Mammary epithelial cell (primary cell): ENCODE measurements at regions of chr19 and their contacts with region 1.

Region 1: GRCh38 chr19:35495107-35496064 is 5.1 kb upstream of the KRTDAP start:
- DNase-seq: peak; percentile 57
- H3K4me3 ChIP-seq: peak overlapping the region in 1 of 3 experiments; percentile 9
- H3K27ac ChIP-seq: no peak overlapping the region
- H3K4me1 ChIP-seq: peaks cover 6% of the 10 kb centered on the region
- H3K27me3 ChIP-seq: peaks cover 3% of the 10 kb centered on the region
- CTCF ChIP-seq: peak; percentile 94 to 99

Region 2: GRCh38 chr19:35269421-35270117 is 225.8 kb before region 1 on chr19:
- CTCF ChIA-PET with region 1: no interaction called
- dilution Hi-C with region 1: no loop called
- in situ Hi-C with region 1: no loop called
- intact Hi-C with region 1: loop called (anchors 1 kb)
- DNase-seq: peak; percentile 70
- H3K4me3 ChIP-seq: peak overlapping the region; percentile 15 to 72 (median 62)
- H3K27ac ChIP-seq: no peak overlapping the region
- H3K4me1 ChIP-seq: peaks cover 37% of the 10 kb centered on the region
- H3K27me3 ChIP-seq: no peaks in the 10 kb centered on the region
- CTCF ChIP-seq: peak; percentile 26 to 61

Region 3: GRCh38 chr19:35346193-35347052 is 149.0 kb before region 1 on chr19:
- CTCF ChIA-PET with region 1: no interaction called
- dilution Hi-C with region 1: no loop called
- in situ Hi-C with region 1: no loop called
- intact Hi-C with region 1: no loop called
- DNase-seq: peak; percentile 17
- H3K4me3 ChIP-seq: no peak overlapping the region
- H3K27ac ChIP-seq: no peak overlapping the region
- H3K4me1 ChIP-seq: no peaks in the 10 kb centered on the region
- H3K27me3 ChIP-seq: no peaks in the 10 kb centered on the region
- CTCF ChIP-seq: no peak

Region 4: GRCh38 chr19:35430409-35431144 is 64.8 kb before region 1 on chr19:
- CTCF ChIA-PET with region 1: no interaction called
- dilution Hi-C with region 1: loop called (anchors 5 kb)
- in situ Hi-C with region 1: no loop called
- intact Hi-C with region 1: no loop called
- DNase-seq: no peak
- H3K4me3 ChIP-seq: no peak overlapping the region
- H3K27ac ChIP-seq: no peak overlapping the region
- H3K4me1 ChIP-seq: no peaks in the 10 kb centered on the region
- H3K27me3 ChIP-seq: no peaks in the 10 kb centered on the region
- CTCF ChIP-seq: no peak

Region 5: DNA sequence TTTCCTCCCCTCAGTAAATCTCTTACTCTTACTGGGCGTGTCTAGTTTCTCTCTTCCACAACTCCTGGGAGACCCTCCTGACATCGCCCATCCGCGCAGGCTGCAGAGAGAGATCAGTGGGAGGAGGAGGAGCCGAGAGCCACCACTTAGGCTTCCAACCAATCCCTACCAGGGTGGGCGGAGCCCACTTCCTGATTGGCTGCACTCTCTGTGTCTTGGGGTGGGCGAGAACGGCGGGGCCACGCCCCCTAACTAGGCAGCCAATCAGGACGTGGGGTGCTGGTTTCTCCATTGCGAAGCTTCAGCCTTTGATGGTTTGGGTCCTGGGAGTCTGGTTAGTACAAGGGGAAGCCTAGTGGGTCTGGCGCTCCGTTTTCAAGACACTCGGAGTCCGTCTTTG is 90.5 kb after region 1 on chr19 and contains the start of gene PMIS2:
- CTCF ChIA-PET with region 1: no interaction called
- dilution Hi-C with region 1: loop called (anchors 5 kb)
- in situ Hi-C with region 1: no loop called
- intact Hi-C with region 1: no loop called
- DNase-seq: no peak
- H3K4me3 ChIP-seq: no peak within 1 kb of the TSS
- H3K27ac ChIP-seq: no peak within 1 kb of the TSS
- H3K4me1 ChIP-seq: no peaks in the 10 kb centered on the region
- H3K27me3 ChIP-seq: no peaks in the 10 kb centered on the region
- CTCF ChIP-seq: no peak
- total RNA-seq, gene PMIS2: not detected